ENCODE measurements at regions of chr12 and their contacts with region 1.

Region 1: DNA sequence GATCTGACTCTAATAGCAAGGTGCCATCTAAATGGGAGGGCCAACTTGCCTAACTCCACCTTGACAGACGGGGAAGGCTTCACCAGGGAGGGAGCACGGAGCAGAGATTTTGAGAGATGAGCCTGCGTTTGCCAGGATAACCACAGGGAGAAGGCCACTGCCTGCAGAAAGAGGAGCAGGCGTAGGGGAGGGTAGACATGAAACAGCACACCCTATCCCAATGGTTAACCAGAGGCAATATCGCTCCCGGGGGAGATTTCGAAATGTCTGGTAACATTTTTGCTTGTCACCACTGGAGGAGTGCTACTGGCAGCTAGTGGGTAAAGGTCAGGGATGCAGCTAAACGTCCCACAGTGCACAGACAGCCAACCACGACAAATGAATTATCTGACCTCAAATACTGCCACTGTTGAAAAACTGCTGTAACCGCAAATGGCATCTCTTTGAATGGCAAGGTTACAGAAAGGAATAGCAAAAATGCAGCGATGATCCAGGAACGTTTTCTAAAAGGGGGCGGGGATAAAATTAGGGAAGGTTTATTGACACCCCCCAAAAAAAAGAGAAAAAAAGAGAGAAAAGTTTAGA is 126.0 kb upstream of the ATF7IP start:
- DNase-seq: no peak
- H3K4me3 ChIP-seq: no peak overlapping the region
- H3K27ac ChIP-seq: no peak overlapping the region
- H3K27me3 ChIP-seq: no peaks in the 10 kb centered on the region
- CTCF ChIP-seq: no peak

Region 2: DNA sequence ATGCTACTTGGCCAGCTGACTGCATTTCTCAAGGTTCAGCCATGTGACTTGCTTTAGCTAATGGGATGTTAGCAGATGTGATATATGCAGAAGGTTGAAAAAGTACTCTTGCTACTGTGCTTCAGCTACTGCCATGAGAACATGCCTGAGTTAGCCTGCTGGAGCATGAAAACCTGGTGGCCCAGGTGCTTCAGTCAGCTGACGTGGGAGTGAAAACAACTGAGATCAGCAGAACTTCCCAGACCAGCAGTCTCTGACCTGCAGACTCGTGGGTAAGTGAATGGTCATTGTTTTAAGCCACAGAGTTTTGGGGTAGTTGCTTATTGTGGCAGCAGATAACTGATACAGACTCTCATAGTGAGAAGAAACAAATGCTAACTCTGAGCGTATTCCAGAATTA is 139.4 kb before region 1 on chr12:
- CTCF ChIA-PET with region 1: no interaction called
- POLR2A ChIA-PET with region 1: no interaction called
- DNase-seq: no peak
- H3K4me3 ChIP-seq: no peak overlapping the region
- H3K27ac ChIP-seq: no peak overlapping the region
- H3K27me3 ChIP-seq: no peaks in the 10 kb centered on the region
- CTCF ChIP-seq: no peak

Region 3: GRCh38 chr12:14185427-14186192 is 53.8 kb before region 1 on chr12:
- CTCF ChIA-PET with region 1: interaction called, 15 read pairs
- POLR2A ChIA-PET with region 1: no interaction called
- DNase-seq: peak; percentile 2
- H3K4me3 ChIP-seq: no peak overlapping the region
- H3K27ac ChIP-seq: no peak overlapping the region
- H3K27me3 ChIP-seq: peaks cover 3% of the 10 kb centered on the region
- CTCF ChIP-seq: peak; percentile 76

Region 4: GRCh38 chr12:14365294-14366208 is 126.1 kb after region 1 on chr12 and contains the start of gene ATF7IP:
- CTCF ChIA-PET with region 1: interaction called, 31 read pairs
- POLR2A ChIA-PET with region 1: no interaction called
- DNase-seq: peak; percentile 94
- H3K4me3 ChIP-seq: peak within 1 kb of the TSS; percentile 77
- H3K27ac ChIP-seq: peak within 1 kb of the TSS; percentile 90
- H3K27me3 ChIP-seq: no peaks in the 10 kb centered on the region
- CTCF ChIP-seq: peak; percentile 30; the same call in 1 of the 2 replicates
- polyA plus RNA-seq, gene ATF7IP: 24.8 and 26.6 TPM in 2 replicates

Region 5: GRCh38 chr12:14424545-14424944 is 185.1 kb after region 1 on chr12:
- CTCF ChIA-PET with region 1: interaction called, 10 read pairs
- POLR2A ChIA-PET with region 1: interaction called, 3 read pairs
- DNase-seq: no peak
- H3K4me3 ChIP-seq: no peak overlapping the region
- H3K27ac ChIP-seq: no peak overlapping the region
- H3K27me3 ChIP-seq: no peaks in the 10 kb centered on the region
- CTCF ChIP-seq: no peak

Region 6: GRCh38 chr12:14473707-14474287 is 234.4 kb after region 1 on chr12:
- CTCF ChIA-PET with region 1: interaction called, 10 read pairs
- POLR2A ChIA-PET with region 1: no interaction called
- DNase-seq: no peak
- H3K4me3 ChIP-seq: no peak overlapping the region
- H3K27ac ChIP-seq: no peak overlapping the region
- H3K27me3 ChIP-seq: no peaks in the 10 kb centered on the region
- CTCF ChIP-seq: no peak

Region 7: GRCh38 chr12:14618983-14619382 is 379.5 kb after region 1 on chr12:
- CTCF ChIA-PET with region 1: interaction called, 69 read pairs
- POLR2A ChIA-PET with region 1: no interaction called
- DNase-seq: no peak
- H3K4me3 ChIP-seq: no peak overlapping the region
- H3K27ac ChIP-seq: no peak overlapping the region
- H3K27me3 ChIP-seq: no peaks in the 10 kb centered on the region
- CTCF ChIP-seq: peak; percentile 41

Region 8: DNA sequence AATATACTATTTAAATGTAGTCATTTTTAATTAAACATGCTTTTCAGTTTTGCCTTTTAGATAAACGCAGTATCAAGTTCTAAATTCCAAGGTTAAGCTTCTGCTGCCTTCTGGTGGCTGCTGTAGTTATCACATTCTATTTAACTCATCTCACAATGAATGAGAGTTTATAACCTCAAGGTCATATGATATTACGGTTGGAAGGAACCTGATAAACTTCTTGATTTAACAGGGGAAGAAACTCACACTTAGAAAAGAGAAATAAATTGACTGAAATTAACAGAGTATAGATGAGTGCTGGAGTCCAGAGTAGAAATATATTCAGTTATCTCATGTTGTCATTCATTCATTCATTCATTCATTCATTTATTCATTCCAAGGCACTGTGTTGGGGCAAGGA is 425.1 kb after region 1 on chr12:
- CTCF ChIA-PET with region 1: interaction called, 73 read pairs
- POLR2A ChIA-PET with region 1: no interaction called
- DNase-seq: no peak
- H3K4me3 ChIP-seq: no peak overlapping the region
- H3K27ac ChIP-seq: no peak overlapping the region
- H3K27me3 ChIP-seq: no peaks in the 10 kb centered on the region
- CTCF ChIP-seq: peak; percentile 56

Measured in AG04450 (cell line).